Posterior cingulate gyrus (tissue), 11 donors: ENCODE measurements at regions of chr6 and their contacts with region 1.

Region 1: DNA sequence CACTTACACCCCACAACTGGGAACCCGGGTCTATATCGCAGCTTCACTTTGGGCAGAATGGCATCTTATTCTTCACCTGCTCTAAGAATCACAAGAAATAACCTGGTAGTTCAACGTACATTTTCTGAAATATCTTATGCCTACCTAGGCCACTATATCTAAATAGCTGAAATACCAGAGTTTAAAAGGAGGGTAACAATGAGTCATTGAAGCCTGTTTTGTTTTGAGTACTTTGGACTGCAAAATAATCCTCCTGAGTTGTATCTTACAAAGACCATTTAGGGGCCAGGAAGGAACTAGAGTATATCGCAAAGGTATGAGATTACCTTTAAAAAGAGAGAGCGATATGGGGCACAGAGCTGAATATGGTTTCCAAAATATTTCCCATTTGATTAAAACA is 96.7 kb upstream of the NUP153 start:
- DNase-seq: no peak

Region 2: DNA sequence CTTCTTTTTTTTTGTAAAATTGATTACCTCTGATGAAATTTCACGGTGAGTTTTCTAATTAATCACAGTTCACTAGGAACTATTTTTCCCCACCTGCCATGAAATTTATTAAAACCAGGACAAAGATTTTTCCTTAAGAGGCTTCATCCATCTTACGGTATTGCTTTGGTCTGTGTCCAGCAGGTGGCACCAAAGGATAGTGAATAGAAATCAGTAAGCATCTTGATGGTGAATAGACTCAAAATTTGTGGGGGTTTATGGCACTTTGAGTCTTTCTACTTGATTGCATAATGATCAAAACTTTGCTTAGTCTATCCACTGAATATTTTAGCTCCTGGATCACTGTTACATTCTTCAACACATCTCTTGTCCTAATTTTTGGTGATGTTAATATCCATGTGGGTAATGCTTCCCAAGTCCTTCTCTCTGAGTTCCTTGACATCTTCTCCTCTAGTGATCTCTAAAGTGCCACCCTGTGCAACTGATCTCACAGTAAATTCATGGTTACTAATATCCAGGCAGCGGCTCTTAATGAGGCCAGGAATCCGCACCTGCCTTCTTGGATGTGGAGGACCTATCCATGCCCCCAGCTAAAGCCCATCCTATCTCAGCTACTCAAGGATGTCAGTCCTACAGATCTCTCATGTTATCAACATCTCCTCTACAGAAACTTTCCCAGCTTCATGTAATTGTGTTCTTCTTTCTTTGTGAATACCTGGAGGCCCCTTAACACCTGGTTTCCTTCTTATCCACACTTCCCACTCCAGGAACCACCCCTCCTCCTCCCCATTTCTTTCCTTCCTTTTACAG is 647.1 kb before region 1 on chr6:
- intact Hi-C with region 1: loop called (anchors 5 kb)
- DNase-seq: peak in 7 of 10 donors; percentile 21 to 87 (median 62)

Region 3: DNA sequence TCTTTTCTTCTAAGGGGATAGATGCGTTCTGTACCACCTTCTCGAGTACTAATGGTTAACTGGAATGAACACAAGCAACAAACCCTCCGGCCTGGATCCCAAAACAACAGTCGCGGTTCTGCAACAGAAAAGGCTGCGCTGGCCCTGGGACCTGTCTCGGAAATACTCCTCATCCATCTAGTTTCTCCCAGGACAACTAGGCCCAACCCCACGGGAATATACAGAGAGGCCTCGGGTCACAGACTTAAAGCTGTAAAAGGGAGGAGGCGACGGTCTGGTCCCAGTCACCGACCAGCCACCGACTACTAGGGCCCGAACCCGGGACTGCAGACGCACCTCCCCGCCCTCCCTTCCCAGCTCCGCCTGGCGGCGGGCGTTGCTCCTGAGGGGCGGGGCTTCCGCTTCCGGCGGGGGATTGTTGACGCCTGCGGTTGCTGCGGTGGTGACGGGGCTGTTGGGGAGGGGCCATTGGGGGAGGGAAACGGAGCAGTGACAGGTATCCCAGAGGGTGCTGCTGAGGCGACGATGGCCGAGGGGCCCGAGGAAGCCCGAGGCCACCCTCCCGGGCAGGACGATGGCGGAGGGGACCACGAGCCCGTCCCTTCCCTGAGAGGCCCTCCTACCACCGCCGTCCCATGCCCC is 203.4 kb before region 1 on chr6 and contains the start of gene FAM8A1:
- intact Hi-C with region 1: loop called (anchors 5 kb)
- DNase-seq: peak; percentile 96 to 100 (median 98)